ENCODE measurements at regions of chr17 and their contacts with region 1.

Region 1: GRCh38 chr17:10803830-10804475 is at the start of gene TMEM238L:
- DNase-seq: no peak
- H3K4me3 ChIP-seq: no peak within 1 kb of the TSS
- H3K27ac ChIP-seq: no peak within 1 kb of the TSS
- H3K4me1 ChIP-seq: no peaks in the 10 kb centered on the region
- H3K27me3 ChIP-seq: no peaks in the 10 kb centered on the region
- CTCF ChIP-seq: no peak
- POLR2A ChIP-seq: no peak
- total RNA-seq, gene TMEM238L: 0.66 TPM in 1 of 3 donors, not detected in the others

Region 2: DNA sequence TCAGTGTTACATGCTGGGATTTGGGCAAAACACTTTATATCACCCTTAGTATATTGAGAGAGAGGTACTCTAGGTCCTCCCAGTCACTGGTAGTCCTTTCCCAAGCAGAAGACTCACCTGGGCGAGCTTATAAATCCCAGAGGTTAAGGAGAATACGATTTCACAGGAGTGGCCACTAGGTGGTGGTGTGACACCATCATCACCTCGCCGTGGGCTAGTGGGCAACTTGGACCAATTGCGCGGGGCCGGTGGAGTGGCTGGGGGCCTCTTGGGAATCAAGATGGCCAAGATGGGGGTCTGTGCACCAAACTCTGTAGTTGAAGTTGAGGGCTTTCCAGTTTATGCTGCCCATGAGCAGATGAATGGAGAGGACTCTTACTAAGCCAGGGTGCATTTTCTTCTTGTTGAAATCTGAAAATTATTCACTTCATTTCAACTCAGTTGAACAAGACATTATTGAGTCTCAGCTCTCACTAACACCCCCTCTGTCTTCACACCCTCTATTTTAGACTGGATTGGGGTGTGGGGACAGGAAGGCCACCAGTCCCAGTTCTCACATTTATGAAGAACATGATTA is 72.1 kb after region 1 on chr17:
- intact Hi-C with region 1: loop called (anchors 2 kb)
- DNase-seq: no peak
- H3K4me3 ChIP-seq: no peak overlapping the region
- H3K27ac ChIP-seq: no peak overlapping the region
- H3K4me1 ChIP-seq: no peaks in the 10 kb centered on the region
- H3K27me3 ChIP-seq: no peaks in the 10 kb centered on the region
- CTCF ChIP-seq: peak; percentile 47 to 68 (median 65)
- POLR2A ChIP-seq: no peak

Region 3: DNA sequence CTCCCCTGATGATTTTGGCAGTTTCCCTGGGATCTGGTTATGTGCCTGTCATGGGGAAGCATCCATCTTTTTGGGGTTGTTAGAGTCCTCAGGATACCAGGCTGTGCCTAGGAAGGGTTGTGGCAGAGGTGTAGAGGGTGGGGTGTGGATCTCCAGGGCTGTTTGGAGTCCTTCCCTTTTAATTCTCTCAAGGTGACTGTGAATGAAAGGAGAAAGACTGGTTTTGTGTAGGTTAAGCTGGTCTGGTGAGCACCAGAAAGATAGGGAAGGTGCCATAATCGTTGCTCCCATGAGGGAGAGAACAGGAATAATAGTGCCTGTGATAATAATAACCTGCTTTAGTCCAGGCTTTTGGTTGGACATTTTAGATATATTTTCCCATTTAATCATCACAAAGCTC is 1223.7 kb after region 1 on chr17:
- intact Hi-C with region 1: loop called (anchors 5 kb)
- DNase-seq: no peak
- H3K4me3 ChIP-seq: no peak overlapping the region
- H3K27ac ChIP-seq: no peak overlapping the region
- H3K4me1 ChIP-seq: peaks cover 0 to 8% of the 10 kb centered on the region in 2 donors
- H3K27me3 ChIP-seq: no peaks in the 10 kb centered on the region
- CTCF ChIP-seq: no peak
- POLR2A ChIP-seq: no peak